HepG2 (cell line): ENCODE measurements at regions of chr1 and their contacts with region 1.

Region 1: DNA sequence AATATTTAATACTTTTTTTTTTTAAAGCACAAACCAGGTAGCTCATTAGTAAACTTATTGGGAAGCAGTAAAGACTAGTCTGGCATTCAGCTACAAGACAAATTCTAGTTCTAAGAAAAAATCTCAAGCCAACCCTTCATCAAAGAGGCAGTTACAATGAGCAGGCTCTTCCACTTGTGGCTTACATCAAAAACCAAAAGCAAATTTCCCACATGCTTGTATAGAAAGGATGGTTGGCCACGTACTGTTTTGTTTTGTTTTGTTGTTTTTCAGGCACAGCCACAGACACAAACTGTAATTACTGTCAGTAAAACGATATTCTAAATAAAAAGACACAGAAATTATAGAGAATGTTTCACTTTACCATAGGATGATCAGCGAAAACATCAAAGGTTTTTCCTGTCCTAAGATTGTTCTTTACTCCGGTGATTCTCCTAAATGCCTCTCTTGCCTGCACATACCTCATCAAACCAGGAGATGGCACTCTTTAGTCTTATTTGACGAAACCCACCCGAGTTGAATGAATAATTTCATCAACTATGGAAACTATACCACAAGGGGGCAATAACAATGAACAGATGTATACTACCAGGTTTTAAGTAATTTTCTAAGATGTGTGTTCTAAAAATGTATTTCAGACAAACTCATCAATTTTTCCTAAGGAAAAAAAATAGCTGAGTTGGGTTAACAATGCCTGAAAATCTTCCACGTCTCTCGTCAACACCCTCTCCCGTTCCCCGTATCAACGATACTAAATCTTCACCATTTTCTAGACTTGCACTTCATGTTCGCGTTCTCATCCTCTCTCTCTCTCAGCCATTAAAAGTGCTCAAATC is 26.9 kb downstream of the RPL5 start:
- DNase-seq: peak; percentile 84
- ATAC-seq: peak; percentile 75
- H3K4me3 ChIP-seq: no peak overlapping the region
- H3K27ac ChIP-seq: no peak overlapping the region
- H3K4me1 ChIP-seq: peaks cover 9% of the 10 kb centered on the region
- H3K27me3 ChIP-seq: no peaks in the 10 kb centered on the region
- CTCF ChIP-seq: peak; percentile 91
- EP300 ChIP-seq: 0 out of 4 replicates have a peak, but pooled peaks of 1 of the 2 experiments have one; percentile 3
- POLR2A ChIP-seq: no peak
- RAD21 ChIP-seq: peak; percentile 94

Region 2: DNA sequence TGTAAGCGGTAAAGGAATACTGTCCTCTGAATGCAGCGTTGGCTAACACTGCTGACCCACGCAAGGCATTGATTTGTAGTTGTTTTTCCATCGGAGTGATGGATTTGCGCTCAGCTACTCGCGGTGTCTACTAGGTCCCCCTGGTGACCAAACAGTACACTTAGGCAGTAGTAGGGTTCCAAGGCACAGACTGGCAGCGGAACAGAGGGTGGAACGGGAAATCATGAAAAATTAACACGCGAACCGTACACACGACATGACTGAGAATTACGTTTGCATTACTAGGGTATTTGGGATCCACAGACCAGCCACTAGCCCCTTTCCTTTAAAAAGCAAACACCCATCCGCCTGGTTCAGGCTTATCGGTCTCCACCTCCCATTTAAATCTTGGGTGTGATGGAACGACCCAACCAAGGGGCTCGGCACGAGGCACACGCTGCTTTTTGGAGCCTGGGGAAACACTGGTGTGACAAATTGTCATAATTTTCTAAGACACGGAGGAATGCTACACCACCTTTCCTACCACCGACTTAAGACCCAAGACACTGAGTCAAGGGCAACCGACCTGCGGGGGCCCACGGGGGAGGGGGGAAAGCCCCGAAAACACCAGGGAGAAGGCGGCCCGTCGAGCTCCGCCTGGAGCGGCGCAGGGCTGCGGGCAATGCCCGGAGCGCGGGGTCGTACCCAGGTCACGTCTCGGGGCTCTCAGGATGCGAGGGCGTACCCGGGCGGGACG is 101.8 kb after region 1 on chr1:
- CTCF ChIA-PET with region 1: interaction called, 70 read pairs
- POLR2A ChIA-PET with region 1: no interaction called
- in situ Hi-C with region 1: loop called (anchors 5 kb)
- intact Hi-C with region 1: loop called (anchors 1 kb)
- DNase-seq: peak; percentile 81
- ATAC-seq: peak; percentile 85
- H3K4me3 ChIP-seq: peak overlapping the region; percentile 81 to 89 (median 84)
- H3K27ac ChIP-seq: peak overlapping the region; percentile 85
- H3K4me1 ChIP-seq: peaks cover 73% of the 10 kb centered on the region
- H3K27me3 ChIP-seq: peaks cover 2 to 13% of the 10 kb centered on the region in 2 experiments; a peak in 2 of 5 replicates
- CTCF ChIP-seq: peak; percentile 93
- EP300 ChIP-seq: no peak
- POLR2A ChIP-seq: 0 out of 4 replicates have a peak, but pooled peaks have one; percentile 10 to 32
- RAD21 ChIP-seq: peak; percentile 79

Region 3: GRCh38 chr1:92968138-92969032 is 109.6 kb after region 1 on chr1:
- CTCF ChIA-PET with region 1: interaction called, 13 read pairs
- POLR2A ChIA-PET with region 1: no interaction called
- in situ Hi-C with region 1: no loop called
- intact Hi-C with region 1: loop called (anchors 2 kb)
- DNase-seq: peak; percentile 45
- ATAC-seq: peak; percentile 85
- H3K4me3 ChIP-seq: 0 out of 6 replicates have a peak overlapping the region, but pooled peaks of 1 of the 3 experiments have one; percentile 29
- H3K27ac ChIP-seq: no peak overlapping the region
- H3K4me1 ChIP-seq: peaks cover 33% of the 10 kb centered on the region
- H3K27me3 ChIP-seq: peaks cover under 1 to 16% of the 10 kb centered on the region in 2 experiments; a peak in 3 of 5 replicates
- CTCF ChIP-seq: peak; percentile 54
- EP300 ChIP-seq: no peak
- POLR2A ChIP-seq: no peak
- RAD21 ChIP-seq: no peak

Region 4: GRCh38 chr1:93061895-93062792 is 203.4 kb after region 1 on chr1:
- CTCF ChIA-PET with region 1: interaction called, 5 read pairs
- POLR2A ChIA-PET with region 1: no interaction called
- in situ Hi-C with region 1: no loop called
- intact Hi-C with region 1: loop called (anchors 2 kb)
- DNase-seq: peak; percentile 54
- ATAC-seq: peak; percentile 88
- H3K4me3 ChIP-seq: no peak overlapping the region
- H3K27ac ChIP-seq: no peak overlapping the region
- H3K4me1 ChIP-seq: no peaks in the 10 kb centered on the region
- H3K27me3 ChIP-seq: no peaks in the 10 kb centered on the region; a peak in 1 of 5 replicates
- CTCF ChIP-seq: peak; percentile 82
- EP300 ChIP-seq: no peak
- POLR2A ChIP-seq: no peak
- RAD21 ChIP-seq: peak; percentile 72